Psoas muscle (tissue), 8 donors: ENCODE measurements at regions of chr7 and their contacts with region 1.

Region 1: DNA sequence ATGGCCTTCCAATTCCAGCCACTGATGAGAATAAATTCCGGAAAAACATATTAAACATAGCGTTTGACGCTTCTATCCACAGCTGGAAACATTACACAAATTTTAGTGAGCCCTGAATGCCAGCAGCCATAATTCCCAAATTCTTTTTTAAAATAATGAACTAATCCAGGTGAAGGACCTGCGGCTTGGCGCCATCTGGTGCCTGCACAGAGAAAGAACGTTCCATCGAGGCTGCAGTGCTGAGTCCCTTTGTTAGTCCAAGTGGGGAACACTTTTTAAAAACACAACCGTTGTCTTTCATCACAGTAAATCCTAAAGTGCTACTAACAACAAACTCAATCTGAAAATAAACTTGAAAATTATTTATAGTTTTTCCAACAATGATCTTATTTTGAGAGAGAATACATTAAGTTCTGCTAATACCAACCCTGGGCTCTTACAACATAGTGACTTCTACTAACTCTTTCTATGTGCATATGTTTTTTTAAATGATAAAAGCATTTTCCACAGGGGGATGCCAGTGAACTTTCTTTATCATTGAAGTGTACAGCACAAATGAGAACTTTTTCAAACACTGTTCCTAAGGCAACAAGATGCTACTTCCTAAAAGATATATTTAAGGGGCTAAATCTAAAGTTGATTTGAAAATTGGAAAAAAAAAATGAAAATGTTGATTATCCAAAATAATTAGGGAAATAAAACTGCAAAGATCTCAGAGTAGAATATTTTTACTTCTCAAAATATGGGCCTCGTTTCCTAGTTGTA is 166.9 kb upstream of the RNF32 start:
- DNase-seq: no peak
- ATAC-seq: no peak
- H3K4me3 ChIP-seq: no peak overlapping the region
- H3K27ac ChIP-seq: no peak overlapping the region
- H3K4me1 ChIP-seq: no peaks in the 10 kb centered on the region
- H3K27me3 ChIP-seq: no peaks in the 10 kb centered on the region
- CTCF ChIP-seq: peak; percentile 57

Region 2: DNA sequence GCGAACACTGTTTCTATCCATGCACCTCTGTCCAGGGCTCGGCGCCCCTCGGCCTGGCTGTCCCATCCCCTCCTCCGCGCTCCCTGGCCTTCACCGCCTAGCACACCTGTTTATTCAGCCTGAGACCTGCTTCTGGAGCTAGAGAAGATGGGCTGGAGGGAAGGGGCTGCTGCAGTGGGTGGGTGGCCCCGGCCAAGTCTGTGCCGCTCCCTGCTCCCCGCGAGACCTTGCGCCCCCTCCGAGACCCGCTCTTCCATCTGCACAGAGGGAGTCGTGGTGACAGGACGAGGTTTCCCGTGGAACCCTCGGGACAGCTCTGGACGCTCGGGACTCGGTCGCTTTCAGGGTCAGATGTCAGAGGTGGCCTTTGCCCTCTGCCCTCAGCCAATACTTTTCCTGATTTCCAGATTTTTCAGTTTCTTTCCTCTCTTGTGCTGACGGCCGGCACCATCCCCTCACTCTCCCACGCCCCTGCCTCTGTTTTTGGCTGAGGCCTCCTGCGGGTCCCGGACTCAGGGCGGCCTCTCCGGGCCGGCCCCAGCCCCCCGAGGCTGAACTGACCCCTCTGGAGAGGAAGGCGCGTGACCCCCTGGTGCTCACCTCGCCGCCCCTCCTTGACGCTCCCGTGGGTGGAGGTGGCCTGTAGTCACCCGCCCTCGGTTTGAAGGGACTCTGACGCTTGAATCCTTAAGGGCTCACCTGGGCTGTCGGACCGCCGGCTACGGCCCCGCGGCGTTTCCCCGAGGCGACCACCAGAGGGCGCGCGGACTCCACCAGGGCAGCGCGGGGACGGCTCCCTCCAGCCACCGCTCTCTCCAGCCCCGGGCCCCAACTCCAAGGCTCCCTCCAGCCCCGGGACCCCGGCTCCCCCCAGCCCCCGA is 677.0 kb before region 1 on chr7:
- intact Hi-C with region 1: loop called (anchors 5 to 10 kb)
- DNase-seq: peak; percentile 60 to 78
- ATAC-seq: peak; percentile 82 to 91 (median 82)
- H3K4me3 ChIP-seq: no peak overlapping the region
- H3K27ac ChIP-seq: no peak overlapping the region
- H3K4me1 ChIP-seq: no peaks in the 10 kb centered on the region
- H3K27me3 ChIP-seq: peaks cover 0 to 55% (median 11%) of the 10 kb centered on the region in 3 donors
- CTCF ChIP-seq: peak; percentile 81

Region 3: DNA sequence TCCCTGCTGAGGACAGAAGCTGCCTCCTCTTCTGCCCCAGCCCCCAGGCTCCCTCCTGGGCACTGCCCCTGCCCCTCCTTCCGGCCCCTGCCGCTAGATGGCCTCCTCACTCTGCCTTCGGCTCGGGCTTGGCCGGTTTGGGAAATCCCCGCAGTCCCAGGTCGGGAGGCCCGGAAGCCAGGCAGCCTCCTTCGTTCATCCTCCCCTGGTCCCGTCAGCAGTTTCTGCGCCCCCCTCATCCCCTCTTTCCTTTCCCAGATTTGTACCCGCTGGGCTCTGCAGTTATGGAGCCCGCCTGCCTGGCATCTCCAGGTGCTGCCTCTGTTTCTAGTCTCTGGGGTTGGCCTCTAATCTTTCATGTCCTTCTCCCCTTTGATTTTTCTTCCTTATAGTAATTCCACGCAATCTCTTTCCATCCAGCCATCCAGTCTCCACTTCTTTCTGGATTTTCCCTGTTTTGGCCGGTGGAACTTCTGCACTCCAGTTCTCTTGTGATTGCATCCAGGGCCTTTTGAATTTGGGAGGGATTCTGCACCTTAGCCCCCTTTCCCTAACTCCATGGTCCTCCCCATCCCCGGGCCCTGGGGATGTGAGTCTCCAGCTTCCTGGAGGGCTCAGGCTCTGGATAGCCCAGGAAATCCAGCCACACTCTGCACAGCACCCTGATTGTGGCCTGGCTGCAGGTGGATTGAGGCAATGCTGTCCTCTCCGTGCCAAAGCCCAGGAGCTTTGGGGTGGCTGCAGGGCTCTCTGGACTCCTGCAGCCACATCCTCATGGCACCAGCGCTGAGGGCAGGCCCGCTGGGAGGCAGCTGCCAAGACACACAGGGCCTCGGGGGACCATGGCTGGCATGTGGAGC is 658.1 kb before region 1 on chr7:
- intact Hi-C with region 1: loop called in 1 of 2 experiments (anchors 5 kb)
- DNase-seq: no peak
- ATAC-seq: peak; percentile 50 to 58 (median 54)
- H3K4me3 ChIP-seq: no peak overlapping the region
- H3K27ac ChIP-seq: no peak overlapping the region
- H3K4me1 ChIP-seq: no peaks in the 10 kb centered on the region
- H3K27me3 ChIP-seq: peaks cover 1 to 80% (median 46%) of the 10 kb centered on the region in 3 donors
- CTCF ChIP-seq: peak; percentile 36